CD14-positive monocyte (primary cell): ENCODE measurements at regions of chr1 and their contacts with region 1.

Region 1: GRCh38 chr1:1777950-1778662 is at the start of gene NADK:
- DNase-seq: peak; percentile 37 to 78 (median 63)
- H3K4me3 ChIP-seq: peak within 1 kb of the TSS; percentile 82 to 99 (median 94)
- H3K4me3 Mint-ChIP-seq: peak within 1 kb of the TSS; percentile 97 to 99
- H3K27ac ChIP-seq: peak within 1 kb of the TSS; percentile 90 to 96
- H3K27ac Mint-ChIP-seq: peak within 1 kb of the TSS; percentile 99 to 100 (median 100)
- H3K4me1 ChIP-seq: peaks cover 64 to 76% of the 10 kb centered on the region in 2 donors
- H3K4me1 Mint-ChIP-seq: peaks cover 64% of the 10 kb centered on the region
- H3K27me3 ChIP-seq: no peaks in the 10 kb centered on the region
- H3K27me3 Mint-ChIP-seq: peaks cover 0 to 7% (median 0%) of the 10 kb centered on the region in 3 donors
- CTCF ChIP-seq: no peak
- polyA plus RNA-seq, gene NADK: 175 to 425 (median 235) TPM

Region 2: GRCh38 chr1:1307908-1308755 is 470.0 kb before region 1 on chr1 and contains the starts of genes ACAP3 and PUSL1:
- intact Hi-C with region 1: loop called in 1 of 2 experiments (anchors 5 kb)
- DNase-seq: peak; percentile 88 to 90 (median 89)
- H3K4me3 ChIP-seq: peak within 1 kb of the TSS; percentile 57 to 91 (median 88)
- H3K4me3 Mint-ChIP-seq: peak within 1 kb of the TSS; percentile 81 to 90
- H3K27ac ChIP-seq: peak within 1 kb of the TSS; percentile 75 to 86
- H3K27ac Mint-ChIP-seq: peak within 1 kb of the TSS; percentile 83 to 96 (median 90)
- H3K4me1 ChIP-seq: peaks cover 39 to 55% of the 10 kb centered on the region in 2 donors
- H3K4me1 Mint-ChIP-seq: peaks cover 36% of the 10 kb centered on the region
- H3K27me3 ChIP-seq: no peaks in the 10 kb centered on the region
- H3K27me3 Mint-ChIP-seq: peaks cover 0 to 4% (median 0%) of the 10 kb centered on the region in 3 donors
- CTCF ChIP-seq: no peak
- polyA plus RNA-seq, gene ACAP3: 3.5 to 132 (median 4.0) TPM
- polyA plus RNA-seq, gene PUSL1: 13.8 to 27.4 (median 14.8) TPM

Region 3: DNA sequence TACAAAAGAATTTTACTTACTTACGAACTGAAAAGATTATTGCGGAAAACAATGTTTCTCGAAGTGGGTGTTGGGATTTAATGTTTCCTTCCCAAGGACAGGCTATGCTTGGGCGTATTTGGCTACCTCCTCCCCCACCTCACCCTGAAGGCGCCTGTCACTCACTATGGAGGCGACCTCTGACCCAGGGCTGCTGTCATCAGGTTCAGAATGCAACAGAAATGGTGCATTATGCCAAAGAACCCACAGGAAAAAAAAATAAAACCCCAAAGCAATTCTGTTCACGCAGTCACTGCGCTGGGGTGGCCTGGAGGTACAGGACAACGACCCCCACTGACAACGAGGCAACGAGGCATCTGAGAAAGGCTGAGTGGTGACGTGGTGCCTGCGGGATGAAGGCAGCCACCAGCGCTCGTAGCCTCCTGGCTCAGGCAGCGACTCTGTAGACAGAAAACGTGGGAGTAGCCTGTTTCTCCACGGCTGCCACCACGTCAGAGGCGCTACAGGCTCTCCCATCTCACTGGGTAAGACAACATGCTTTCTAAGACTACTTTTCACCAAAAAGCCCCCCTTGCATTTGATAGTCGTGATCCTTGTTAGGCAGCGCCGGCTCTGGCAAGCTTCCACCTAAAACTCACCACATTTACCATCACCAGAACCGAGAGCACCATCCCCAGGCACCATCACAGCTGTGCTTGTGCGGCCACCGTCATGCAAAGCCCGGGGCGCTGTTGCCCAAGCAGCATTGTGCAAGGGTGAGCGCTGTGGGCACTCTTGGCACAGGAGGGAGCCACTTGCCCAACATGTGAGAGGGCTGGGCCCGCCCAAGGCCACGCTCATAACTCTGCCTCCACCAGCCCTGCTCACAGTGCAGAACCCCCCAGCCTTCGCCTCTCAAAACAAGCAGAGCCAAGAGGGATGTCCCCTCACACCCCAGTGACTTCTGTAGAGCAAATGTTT is 14.2 kb before region 1 on chr1:
- intact Hi-C with region 1: loop called (anchors 2 kb)
- DNase-seq: peak; percentile 85 to 90 (median 89)
- H3K4me3 ChIP-seq: no peak overlapping the region
- H3K4me3 Mint-ChIP-seq: peak overlapping the region; percentile 9 to 56
- H3K27ac ChIP-seq: peak overlapping the region; percentile 51 to 75
- H3K27ac Mint-ChIP-seq: peak overlapping the region; percentile 83 to 95 (median 87)
- H3K4me1 ChIP-seq: peaks cover 37 to 53% of the 10 kb centered on the region in 2 donors
- H3K4me1 Mint-ChIP-seq: peaks cover 48% of the 10 kb centered on the region
- H3K27me3 ChIP-seq: no peaks in the 10 kb centered on the region
- H3K27me3 Mint-ChIP-seq: peaks cover 0 to 2% (median 0%) of the 10 kb centered on the region in 3 donors
- CTCF ChIP-seq: peak; percentile 68

Region 4: DNA sequence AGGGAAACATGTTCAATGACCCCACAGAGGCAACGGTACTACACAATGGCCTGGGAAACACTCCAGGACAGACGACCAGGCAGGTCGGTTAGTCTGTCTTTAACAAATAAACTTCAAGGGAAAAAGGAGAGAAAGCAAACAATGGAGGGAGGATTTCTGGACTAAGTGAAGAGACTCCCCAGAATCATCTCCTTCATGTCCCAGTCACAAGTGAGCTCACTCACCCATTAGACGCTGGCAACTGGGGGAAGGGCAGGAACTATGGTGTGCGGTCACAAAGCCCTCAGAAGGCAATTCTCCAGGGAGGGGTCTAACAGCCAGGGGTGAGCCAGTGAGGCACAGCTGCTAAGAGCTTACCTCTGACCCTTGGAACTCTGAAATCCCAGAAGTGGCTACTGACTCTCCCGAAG is 55.8 kb after region 1 on chr1:
- intact Hi-C with region 1: no loop called
- DNase-seq: no peak
- H3K4me3 ChIP-seq: no peak overlapping the region
- H3K4me3 Mint-ChIP-seq: no peak overlapping the region
- H3K27ac ChIP-seq: peak overlapping the region in 1 of 2 donors; percentile 9
- H3K27ac Mint-ChIP-seq: peak overlapping the region in 3 of 7 donors; percentile 43 to 73 (median 51)
- H3K4me1 ChIP-seq: no peaks in the 10 kb centered on the region
- H3K4me1 Mint-ChIP-seq: no peaks in the 10 kb centered on the region
- H3K27me3 ChIP-seq: no peaks in the 10 kb centered on the region
- H3K27me3 Mint-ChIP-seq: no peaks in the 10 kb centered on the region
- CTCF ChIP-seq: no peak

Region 5: GRCh38 chr1:1890506-1891348 is 112.6 kb after region 1 on chr1 and contains the start of gene GNB1:
- intact Hi-C with region 1: loop called (anchors 5 kb)
- DNase-seq: peak; percentile 85 to 92 (median 89)
- H3K4me3 ChIP-seq: peak within 1 kb of the TSS; percentile 76 to 98 (median 89)
- H3K4me3 Mint-ChIP-seq: peak within 1 kb of the TSS; percentile 87 to 89
- H3K27ac ChIP-seq: peak within 1 kb of the TSS; percentile 76 to 91
- H3K27ac Mint-ChIP-seq: peak within 1 kb of the TSS; percentile 83 to 93 (median 88)
- H3K4me1 ChIP-seq: peaks cover 34 to 45% of the 10 kb centered on the region in 2 donors
- H3K4me1 Mint-ChIP-seq: peaks cover 53% of the 10 kb centered on the region
- H3K27me3 ChIP-seq: peaks cover 0 to 6% of the 10 kb centered on the region in 2 donors
- H3K27me3 Mint-ChIP-seq: peaks cover 9 to 18% (median 16%) of the 10 kb centered on the region in 3 donors
- CTCF ChIP-seq: no peak
- polyA plus RNA-seq, gene GNB1: 41.9 to 357 (median 111) TPM

Region 6: GRCh38 chr1:1906185-1907097 is 128.3 kb after region 1 on chr1:
- intact Hi-C with region 1: loop called in 1 of 2 experiments (anchors 5 kb)
- DNase-seq: peak; percentile 80 to 85 (median 81)
- H3K4me3 ChIP-seq: no peak overlapping the region
- H3K4me3 Mint-ChIP-seq: peak overlapping the region in 1 of 2 donors; percentile 17
- H3K27ac ChIP-seq: no peak overlapping the region
- H3K27ac Mint-ChIP-seq: peak overlapping the region in 4 of 7 donors; percentile 35 to 80 (median 50)
- H3K4me1 ChIP-seq: peaks cover 13 to 17% of the 10 kb centered on the region in 2 donors
- H3K4me1 Mint-ChIP-seq: peaks cover 14% of the 10 kb centered on the region
- H3K27me3 ChIP-seq: peaks cover 0 to 5% of the 10 kb centered on the region in 2 donors
- H3K27me3 Mint-ChIP-seq: peaks cover 3 to 7% (median 6%) of the 10 kb centered on the region in 3 donors
- CTCF ChIP-seq: peak; percentile 84